OCI-LY7 (cell line): ENCODE measurements at regions of chrX and their contacts with region 1.

Region 1: DNA sequence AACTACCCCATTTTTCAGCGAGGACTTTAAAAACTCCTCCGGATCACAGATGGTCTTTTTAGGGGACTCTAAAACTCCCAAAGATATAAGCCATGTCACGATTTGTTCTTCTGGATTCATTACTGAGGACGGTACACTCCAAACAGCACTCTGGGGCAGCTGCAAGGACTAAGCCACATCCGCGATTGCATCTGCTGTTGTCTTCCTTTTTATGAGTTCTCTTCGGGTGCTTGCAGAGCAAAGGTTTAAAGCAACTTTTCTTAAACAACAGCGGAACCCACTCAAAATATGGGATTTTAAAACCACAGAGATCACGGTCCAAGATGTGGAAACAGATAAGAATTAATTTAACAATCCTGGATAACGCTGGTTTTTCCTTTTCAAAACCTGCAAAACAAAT is at the start of gene ARHGEF6:
- DNase-seq: peak; percentile 74
- H3K4me3 ChIP-seq: peak within 1 kb of the TSS; percentile 80
- H3K27ac ChIP-seq: peak within 1 kb of the TSS; percentile 89
- H3K4me1 ChIP-seq: peaks cover 64% of the 10 kb centered on the region
- CTCF ChIP-seq: no peak
- total RNA-seq, gene ARHGEF6: 50.8 and 52.3 TPM in 2 replicates

Region 2: DNA sequence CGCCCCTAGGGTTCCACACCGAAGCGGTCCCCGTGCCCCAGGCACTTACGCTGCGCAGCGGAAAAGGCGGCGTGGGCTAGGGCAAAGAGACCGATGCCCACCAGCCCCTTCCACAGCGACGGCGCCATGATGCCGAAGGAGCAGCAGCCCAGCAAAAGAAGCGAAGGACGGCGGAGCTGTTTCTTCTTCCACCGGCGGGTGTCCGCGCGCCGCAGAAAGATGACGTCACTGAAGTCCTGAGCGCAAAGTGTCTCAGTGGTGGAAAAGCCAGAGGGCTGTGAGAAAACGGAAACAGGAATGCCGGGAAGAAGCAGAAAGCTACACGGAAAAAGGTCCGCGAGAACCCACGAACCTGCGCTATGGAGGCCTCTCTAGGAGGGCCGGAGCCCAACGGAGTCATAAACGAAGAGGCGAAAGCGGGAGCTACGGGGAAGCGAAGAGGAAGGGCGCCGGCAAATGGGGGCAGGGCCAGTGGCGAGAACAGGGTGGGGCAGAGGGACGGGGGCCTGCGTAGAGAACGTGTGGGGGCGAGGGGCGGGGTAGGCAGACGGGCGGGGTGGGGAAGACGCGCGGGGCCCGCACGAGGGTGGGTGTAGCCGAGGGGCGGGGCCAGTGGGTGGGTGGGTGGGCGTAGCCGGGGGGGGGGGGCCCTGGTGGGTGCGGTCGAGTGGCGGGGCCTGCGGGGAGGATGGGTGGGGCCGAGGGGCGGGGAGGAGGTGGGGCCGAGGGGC is 807.0 kb before region 1 on chrX and contains the start of gene MMGT1:
- CTCF ChIA-PET with region 1: no interaction called
- POLR2A ChIA-PET with region 1: no interaction called
- intact Hi-C with region 1: loop called (anchors 10 kb)
- DNase-seq: peak; percentile 85
- H3K4me3 ChIP-seq: peak within 1 kb of the TSS; percentile 96
- H3K27ac ChIP-seq: peak within 1 kb of the TSS; percentile 53
- H3K4me1 ChIP-seq: peaks cover 22% of the 10 kb centered on the region
- CTCF ChIP-seq: no peak
- total RNA-seq, gene MMGT1: 7.7 and 8.9 TPM in 2 replicates

Region 3: DNA sequence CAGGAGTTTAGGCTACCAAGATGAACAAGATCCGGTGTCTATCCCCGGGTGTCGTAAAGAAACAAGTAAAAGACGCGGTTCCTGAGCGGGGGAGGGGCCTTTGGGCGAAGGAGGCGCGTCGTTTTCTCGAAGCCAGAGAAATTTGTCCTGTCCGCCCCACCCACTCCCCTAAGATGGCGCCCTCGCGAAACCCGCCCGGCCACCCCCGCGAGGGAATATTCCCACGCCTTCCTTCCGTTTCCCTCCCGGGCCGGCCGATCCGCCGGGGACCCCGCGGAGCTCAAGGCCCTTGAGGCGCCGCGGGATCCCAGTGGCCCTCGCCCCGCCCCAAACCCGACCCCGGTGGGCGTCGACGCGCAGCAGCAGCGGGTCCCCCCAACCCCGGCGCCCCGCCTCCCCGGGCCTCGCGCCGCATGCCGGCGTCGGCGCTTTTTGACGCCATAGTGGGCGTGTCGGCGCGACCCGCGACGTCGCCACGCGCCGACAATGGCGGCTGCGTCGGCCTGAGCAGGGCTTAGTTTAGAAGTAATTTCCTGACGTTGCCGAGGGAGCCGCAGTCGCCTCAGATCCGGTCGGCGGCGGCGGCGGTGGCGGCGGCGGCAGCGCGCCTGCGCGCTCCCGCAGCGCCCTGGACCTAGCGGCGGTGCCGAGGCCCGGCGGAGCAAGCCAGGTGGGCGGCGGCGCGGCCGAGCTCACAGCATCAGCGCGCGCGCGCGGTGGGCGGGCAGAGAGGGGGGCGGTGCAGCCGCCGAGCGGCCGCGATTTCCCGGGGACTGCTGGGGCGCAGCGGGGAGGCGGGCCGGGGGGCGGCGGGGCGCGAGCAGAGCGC is 283.8 kb before region 1 on chrX and contains the start of gene HTATSF1:
- CTCF ChIA-PET with region 1: no interaction called
- POLR2A ChIA-PET with region 1: no interaction called
- intact Hi-C with region 1: loop called (anchors 5 kb)
- DNase-seq: peak; percentile 88
- H3K4me3 ChIP-seq: peak within 1 kb of the TSS; percentile 92
- H3K27ac ChIP-seq: peak within 1 kb of the TSS; percentile 90
- H3K4me1 ChIP-seq: peaks cover 18% of the 10 kb centered on the region
- CTCF ChIP-seq: no peak
- total RNA-seq, gene HTATSF1: 58.1 and 68.6 TPM in 2 replicates

Region 4: GRCh38 chrX:136572030-136572429 is 208.7 kb before region 1 on chrX:
- CTCF ChIA-PET with region 1: no interaction called
- POLR2A ChIA-PET with region 1: no interaction called
- intact Hi-C with region 1: no loop called
- DNase-seq: peak; percentile 4
- H3K4me3 ChIP-seq: no peak overlapping the region
- H3K27ac ChIP-seq: no peak overlapping the region
- H3K4me1 ChIP-seq: no peaks in the 10 kb centered on the region
- CTCF ChIP-seq: peak; percentile 45

Region 5: DNA sequence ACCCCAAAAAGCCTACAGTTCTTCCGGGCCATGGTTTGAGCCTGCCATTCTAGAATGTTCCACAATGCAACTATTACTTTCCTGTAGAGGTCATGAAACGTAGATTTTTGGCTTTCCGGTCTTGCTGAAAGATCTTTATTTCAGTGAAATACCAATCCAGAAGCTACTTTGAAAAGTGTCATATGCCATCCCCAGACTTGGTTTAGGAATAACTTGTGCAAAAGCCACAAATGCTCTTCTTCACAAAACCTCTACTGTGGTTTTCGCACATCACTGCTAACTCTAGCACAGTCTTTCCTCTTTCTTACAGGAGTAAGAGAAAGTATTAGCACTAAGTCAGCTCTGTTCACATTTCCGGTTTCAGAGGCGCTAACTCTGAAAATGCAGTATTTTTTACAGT is 145.5 kb before region 1 on chrX:
- CTCF ChIA-PET with region 1: no interaction called
- POLR2A ChIA-PET with region 1: no interaction called
- intact Hi-C with region 1: no loop called
- DNase-seq: no peak
- H3K4me3 ChIP-seq: no peak overlapping the region
- H3K27ac ChIP-seq: no peak overlapping the region
- H3K4me1 ChIP-seq: no peaks in the 10 kb centered on the region
- CTCF ChIP-seq: no peak

Region 6: GRCh38 chrX:136880452-136881013 is 99.8 kb after region 1 on chrX and contains the start of gene RBMX:
- CTCF ChIA-PET with region 1: no interaction called
- POLR2A ChIA-PET with region 1: interaction called, 3 read pairs
- intact Hi-C with region 1: loop called (anchors 2 kb)
- DNase-seq: peak; percentile 93
- H3K4me3 ChIP-seq: peak within 1 kb of the TSS; percentile 99
- H3K27ac ChIP-seq: peak within 1 kb of the TSS; percentile 79
- H3K4me1 ChIP-seq: peaks cover 11% of the 10 kb centered on the region
- CTCF ChIP-seq: no peak
- total RNA-seq, gene RBMX: 321 and 394 TPM in 2 replicates

Region 7: GRCh38 chrX:136909706-136910564 is 129.2 kb after region 1 on chrX:
- CTCF ChIA-PET with region 1: no interaction called
- POLR2A ChIA-PET with region 1: interaction called, 3 read pairs
- intact Hi-C with region 1: loop called (anchors 1 kb)
- DNase-seq: peak; percentile 65
- H3K4me3 ChIP-seq: peak overlapping the region; percentile 88
- H3K27ac ChIP-seq: peak overlapping the region; percentile 66
- H3K4me1 ChIP-seq: peaks cover 24% of the 10 kb centered on the region
- CTCF ChIP-seq: no peak